Common myeloid progenitor, CD34-positive (primary cell): ENCODE measurements at regions of chr9 and their contacts with region 1.

Region 1: DNA sequence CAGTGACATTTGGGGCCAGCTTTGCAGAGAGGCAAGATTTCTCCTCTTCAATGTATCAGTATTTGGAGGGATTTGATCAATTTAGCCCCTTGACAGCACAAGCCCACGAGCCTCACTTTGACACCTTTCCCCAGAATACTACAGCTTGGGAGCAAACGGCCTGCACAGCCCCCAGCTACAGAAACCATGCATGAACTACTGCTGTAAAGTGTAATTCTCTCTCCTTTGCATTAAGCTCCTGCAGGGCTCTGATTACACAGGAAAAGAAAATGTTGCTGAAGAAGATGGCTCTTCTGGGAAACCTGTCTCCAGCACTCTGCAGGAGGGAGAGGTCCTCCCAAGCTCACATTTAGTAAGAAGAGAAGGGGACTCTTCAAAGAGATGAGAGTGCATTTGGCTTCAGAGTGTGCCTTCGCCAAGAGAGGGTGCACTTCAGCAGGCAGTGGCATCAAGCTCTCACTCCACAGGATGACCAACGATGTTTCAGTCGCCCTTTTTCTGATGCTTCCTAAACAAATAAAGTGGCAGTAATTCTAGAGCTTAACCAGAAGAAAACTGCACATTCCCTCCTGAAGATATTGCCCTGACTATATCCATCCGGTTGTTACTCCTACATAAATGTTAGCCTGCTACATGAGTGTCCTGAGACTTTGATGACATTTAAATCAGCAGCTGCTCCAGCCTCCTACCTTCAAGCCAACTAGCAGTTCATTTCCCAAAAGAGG is 272.2 kb downstream of the AUH start:
- DNase-seq: peak; percentile 59 to 74 (median 69)
- H3K4me3 ChIP-seq: no peak overlapping the region
- H3K27ac ChIP-seq: no peak overlapping the region
- H3K4me1 ChIP-seq: peaks cover 0 to 13% (median 4%) of the 10 kb centered on the region in 4 experiments
- H3K27me3 ChIP-seq: no peaks in the 10 kb centered on the region

Region 2: GRCh38 chr9:91100878-91101450 is 11.4 kb after region 1 on chr9:
- CTCF ChIA-PET with region 1: interaction called, 23 read pairs
- POLR2A ChIA-PET with region 1: interaction called, 6 read pairs
- DNase-seq: no peak
- H3K4me3 ChIP-seq: no peak overlapping the region
- H3K27ac ChIP-seq: no peak overlapping the region
- H3K4me1 ChIP-seq: peaks cover 10 to 35% (median 21%) of the 10 kb centered on the region in 4 experiments
- H3K27me3 ChIP-seq: no peaks in the 10 kb centered on the region

Region 3: GRCh38 chr9:91150998-91151717 is 61.6 kb after region 1 on chr9:
- CTCF ChIA-PET with region 1: interaction called, 13 read pairs
- POLR2A ChIA-PET with region 1: interaction called, 3 read pairs
- DNase-seq: peak; percentile 97 to 99 (median 99)
- H3K4me3 ChIP-seq: peak overlapping the region in 4 of 7 experiments; percentile 4 to 46 (median 16)
- H3K27ac ChIP-seq: peak overlapping the region; percentile 41 to 75
- H3K4me1 ChIP-seq: peaks cover 22 to 46% (median 39%) of the 10 kb centered on the region in 4 experiments
- H3K27me3 ChIP-seq: no peaks in the 10 kb centered on the region

Region 4: DNA sequence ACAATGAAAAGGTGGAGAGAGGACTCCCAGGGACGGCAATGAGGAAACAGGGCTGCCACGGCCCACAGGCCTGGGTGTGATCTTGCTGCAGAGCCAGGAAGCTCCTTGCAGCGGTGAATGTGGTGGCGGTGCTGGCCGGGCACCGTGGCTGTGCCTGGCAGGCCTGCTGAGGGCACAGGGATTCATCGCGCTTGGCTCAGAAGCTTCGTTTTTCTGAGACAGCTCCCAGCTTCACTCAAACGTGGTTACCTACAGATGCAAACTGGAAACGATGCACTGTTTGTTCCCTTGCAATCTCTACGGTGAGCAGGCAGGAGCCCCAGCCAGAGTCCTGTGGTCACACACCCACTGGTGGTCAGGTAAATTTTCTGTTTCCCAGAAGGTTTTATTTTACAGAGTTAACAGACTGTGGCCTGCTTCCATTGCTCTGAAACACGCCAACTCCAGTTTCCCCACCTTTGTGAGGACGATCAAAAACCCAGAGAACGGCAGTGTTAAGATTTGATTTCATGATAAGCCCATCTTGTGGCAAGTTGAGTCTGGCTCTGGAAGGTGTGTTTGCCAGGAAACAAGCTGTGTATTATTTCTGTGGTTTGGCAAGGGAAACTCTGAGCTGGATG is 88.2 kb after region 1 on chr9:
- CTCF ChIA-PET with region 1: interaction called, 12 read pairs
- POLR2A ChIA-PET with region 1: interaction called, 3 read pairs
- DNase-seq: peak; percentile 34 to 89 (median 84)
- H3K4me3 ChIP-seq: peak overlapping the region in 1 of 7 experiments; percentile 33
- H3K27ac ChIP-seq: no peak overlapping the region
- H3K4me1 ChIP-seq: peaks cover 14 to 25% (median 22%) of the 10 kb centered on the region in 4 experiments
- H3K27me3 ChIP-seq: no peaks in the 10 kb centered on the region

Region 5: GRCh38 chr9:91193658-91194391 is 104.3 kb after region 1 on chr9:
- CTCF ChIA-PET with region 1: interaction called, 12 read pairs
- POLR2A ChIA-PET with region 1: no interaction called
- DNase-seq: peak; percentile 96 to 98 (median 97)
- H3K4me3 ChIP-seq: peak overlapping the region in 6 of 7 experiments; percentile 42 to 72 (median 58)
- H3K27ac ChIP-seq: peak overlapping the region; percentile 97 to 98
- H3K4me1 ChIP-seq: peaks cover 5 to 56% (median 49%) of the 10 kb centered on the region in 4 experiments
- H3K27me3 ChIP-seq: no peaks in the 10 kb centered on the region

Region 6: DNA sequence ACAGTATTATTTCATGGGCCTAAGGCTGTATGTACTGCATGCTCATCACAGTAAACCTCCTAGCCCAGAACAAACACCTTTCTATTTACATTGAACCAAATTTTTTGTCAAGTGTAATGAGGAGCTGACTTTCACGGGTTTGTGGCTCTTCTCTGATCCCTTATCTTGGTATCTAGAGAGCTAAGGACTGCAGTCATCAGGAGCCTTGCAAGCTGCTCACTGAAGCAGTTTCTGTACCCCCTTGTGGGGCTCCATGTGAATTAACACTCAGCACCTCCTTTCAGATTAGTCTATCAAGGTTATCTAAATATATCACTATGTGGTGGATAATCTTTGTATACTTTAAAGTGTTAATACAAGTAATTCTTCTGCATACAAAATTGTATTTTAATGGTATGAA is 163.9 kb after region 1 on chr9:
- CTCF ChIA-PET with region 1: interaction called, 30 read pairs
- POLR2A ChIA-PET with region 1: interaction called, 5 read pairs
- DNase-seq: peak; percentile 54 to 62 (median 57)
- H3K4me3 ChIP-seq: no peak overlapping the region
- H3K27ac ChIP-seq: no peak overlapping the region
- H3K4me1 ChIP-seq: peaks cover 0 to 3% (median 1%) of the 10 kb centered on the region in 4 experiments
- H3K27me3 ChIP-seq: no peaks in the 10 kb centered on the region

Region 7: GRCh38 chr9:91422758-91423711 is 333.5 kb after region 1 on chr9:
- CTCF ChIA-PET with region 1: interaction called, 26 read pairs
- POLR2A ChIA-PET with region 1: interaction called, 3 read pairs
- DNase-seq: peak; percentile 73 to 87 (median 82)
- H3K4me3 ChIP-seq: peak overlapping the region; percentile 51 to 98 (median 79)
- H3K27ac ChIP-seq: peak overlapping the region in 1 of 2 experiments; percentile 60
- H3K4me1 ChIP-seq: peaks cover 28 to 48% (median 42%) of the 10 kb centered on the region in 4 experiments
- H3K27me3 ChIP-seq: peaks cover 11 to 58% (median 16%) of the 10 kb centered on the region in 5 experiments